Psoas muscle (tissue), 8 donors: ENCODE measurements at regions of chr17 and their contacts with region 1.

Region 1: GRCh38 chr17:2656283-2656682 is 55.3 kb downstream of the CLUH start:
- DNase-seq: no peak
- ATAC-seq: peak; percentile 43 to 77 (median 62)
- H3K4me3 ChIP-seq: no peak overlapping the region
- H3K27ac ChIP-seq: peak overlapping the region; percentile 42
- H3K4me1 ChIP-seq: peaks cover 13% of the 10 kb centered on the region
- H3K27me3 ChIP-seq: no peaks in the 10 kb centered on the region
- CTCF ChIP-seq: no peak

Region 2: GRCh38 chr17:2602597-2603017 is 53.7 kb before region 1 on chr17:
- intact Hi-C with region 1: loop called in 1 of 2 experiments (anchors 10 kb)
- DNase-seq: no peak
- ATAC-seq: no peak
- H3K4me3 ChIP-seq: no peak overlapping the region
- H3K27ac ChIP-seq: peak overlapping the region; percentile 53
- H3K4me1 ChIP-seq: peaks cover 55% of the 10 kb centered on the region
- H3K27me3 ChIP-seq: no peaks in the 10 kb centered on the region
- CTCF ChIP-seq: no peak

Region 3: GRCh38 chr17:2613089-2613808 is 43.0 kb before region 1 on chr17:
- intact Hi-C with region 1: loop called (anchors 10 kb)
- DNase-seq: no peak
- ATAC-seq: peak in 1 of 4 donors; percentile 34
- H3K4me3 ChIP-seq: no peak overlapping the region
- H3K27ac ChIP-seq: no peak overlapping the region
- H3K4me1 ChIP-seq: peaks cover 48% of the 10 kb centered on the region
- H3K27me3 ChIP-seq: no peaks in the 10 kb centered on the region
- CTCF ChIP-seq: no peak

Region 4: DNA sequence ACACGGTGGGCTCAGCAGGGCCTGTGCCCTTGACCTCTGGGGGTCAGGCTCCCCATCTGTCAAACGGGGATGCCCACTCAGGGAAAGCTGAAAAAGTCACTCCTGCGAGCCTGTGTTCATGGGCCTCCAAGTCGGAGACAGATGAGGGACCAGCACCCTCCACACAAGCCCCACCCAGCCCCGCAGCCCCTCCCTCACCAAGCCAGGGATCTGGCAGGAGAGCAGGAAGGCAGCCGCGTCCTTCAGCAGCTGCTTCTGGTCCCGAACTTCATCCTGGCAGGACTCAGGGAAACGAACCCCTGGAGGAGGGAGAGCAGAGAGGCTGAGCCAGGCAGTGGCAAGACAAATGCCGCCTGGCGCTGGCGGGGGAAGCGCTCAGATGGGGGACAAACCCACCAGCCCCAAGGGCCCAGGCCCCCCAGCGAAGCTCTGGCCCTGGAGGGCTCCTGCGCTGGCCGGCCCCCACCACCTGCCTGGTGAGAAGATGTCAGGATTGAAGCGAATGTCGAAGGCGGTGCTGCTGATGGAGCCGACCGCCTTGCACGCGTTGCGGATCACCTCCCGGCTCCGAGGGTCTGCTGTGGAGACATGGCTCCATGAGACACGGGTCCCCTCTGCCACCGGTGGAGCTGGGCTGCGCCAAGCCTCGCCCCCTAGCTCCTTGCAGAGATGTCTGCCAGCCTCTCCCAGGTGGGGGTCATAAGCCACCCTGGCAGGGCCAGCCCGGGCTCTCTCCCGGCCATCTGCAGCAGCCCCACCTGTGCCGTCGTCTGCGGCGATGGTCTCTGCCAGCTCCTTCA is 39.9 kb after region 1 on chr17:
- intact Hi-C with region 1: no loop called
- DNase-seq: no peak
- ATAC-seq: no peak
- H3K4me3 ChIP-seq: no peak overlapping the region
- H3K27ac ChIP-seq: no peak overlapping the region
- H3K4me1 ChIP-seq: no peaks in the 10 kb centered on the region
- H3K27me3 ChIP-seq: no peaks in the 10 kb centered on the region
- CTCF ChIP-seq: no peak